ENCODE measurements at regions of chr7 and their contacts with region 1.

Region 1: DNA sequence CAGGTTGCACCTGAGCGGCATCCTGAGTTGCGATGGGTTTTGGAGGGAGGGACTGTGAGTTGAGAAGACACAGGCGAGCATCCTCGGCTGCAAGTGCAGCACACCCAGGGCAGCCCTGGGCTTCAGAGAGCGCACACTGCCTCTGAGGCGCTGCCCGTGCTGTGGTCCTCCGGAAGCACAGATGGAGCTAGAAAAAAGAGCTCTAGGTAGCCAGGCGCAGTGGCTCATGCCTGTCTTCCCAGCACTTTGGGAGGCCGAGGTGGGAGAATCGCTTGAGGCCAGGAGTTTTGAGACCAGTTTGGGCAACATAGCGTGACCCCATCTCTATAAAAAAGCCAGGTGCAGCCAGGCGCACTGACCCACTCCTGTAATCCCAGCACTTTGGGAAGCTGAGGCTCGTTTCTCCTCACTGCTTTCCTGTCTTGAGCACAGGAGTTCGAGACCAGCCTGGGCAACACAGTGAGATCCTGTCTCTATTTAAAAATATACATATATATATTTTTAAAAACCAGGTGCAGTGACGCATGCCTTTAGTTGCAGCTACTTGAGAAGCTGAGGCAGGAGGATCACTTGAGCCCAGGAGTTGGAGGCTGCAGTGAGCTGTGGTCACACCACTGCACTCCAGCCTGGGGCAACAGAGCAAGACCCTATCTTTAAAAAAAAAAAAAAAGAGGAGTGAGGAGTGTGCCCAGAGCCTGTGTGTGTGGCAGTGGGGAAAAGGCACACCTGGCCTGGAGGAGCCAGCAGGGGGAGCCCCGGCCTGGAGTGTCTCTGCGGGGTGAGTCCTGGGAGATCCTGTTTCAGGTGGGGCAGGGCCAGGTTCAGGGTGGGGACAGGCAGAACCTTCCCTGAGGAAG is 9.3 kb upstream of the ARPC1B start:
- DNase-seq: no peak
- H3K4me3 ChIP-seq: no peak overlapping the region
- H3K27ac ChIP-seq: peak overlapping the region in 2 of 4 donors; percentile 2 to 62
- H3K4me1 ChIP-seq: peaks cover 0 to 26% (median 0%) of the 10 kb centered on the region in 3 donors
- H3K27me3 ChIP-seq: no peaks in the 10 kb centered on the region
- CTCF ChIP-seq: peak; percentile 55 to 73 (median 60)
- POLR2A ChIP-seq: no peak

Region 2: GRCh38 chr7:99193527-99194220 is 171.5 kb before region 1 on chr7:
- intact Hi-C with region 1: no loop called
- DNase-seq: no peak
- H3K4me3 ChIP-seq: no peak overlapping the region
- H3K27ac ChIP-seq: peak overlapping the region in 3 of 4 donors; percentile 13 to 44 (median 24)
- H3K4me1 ChIP-seq: peaks cover 0 to 35% (median 0%) of the 10 kb centered on the region in 3 donors
- H3K27me3 ChIP-seq: no peaks in the 10 kb centered on the region
- CTCF ChIP-seq: peak in 1 of 6 experiments; percentile 11
- POLR2A ChIP-seq: no peak

Region 3: DNA sequence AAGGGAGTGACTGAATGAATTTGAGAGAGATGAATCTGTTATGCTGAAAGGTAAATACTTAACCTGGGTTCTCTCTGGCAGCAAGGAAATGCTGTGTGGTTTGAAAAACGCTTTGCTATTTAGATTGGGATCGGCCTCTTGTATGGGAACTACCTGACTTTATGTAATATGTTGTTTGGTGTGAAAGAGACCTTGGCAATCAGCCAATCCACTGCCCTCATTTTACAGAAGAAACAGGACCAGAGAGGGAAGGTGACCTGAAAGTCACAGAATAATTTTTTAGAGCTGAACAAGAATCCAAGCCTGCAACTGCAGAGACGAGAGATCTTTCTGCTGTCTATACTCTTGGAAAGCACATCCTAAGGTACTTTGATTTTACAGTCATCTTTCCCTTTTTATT is 44.6 kb after region 1 on chr7:
- intact Hi-C with region 1: loop called (anchors 5 kb)
- DNase-seq: no peak
- H3K4me3 ChIP-seq: peak overlapping the region; percentile 74 to 98 (median 92)
- H3K27ac ChIP-seq: peak overlapping the region; percentile 96 to 99 (median 98)
- H3K4me1 ChIP-seq: peaks cover 22 to 50% (median 23%) of the 10 kb centered on the region in 3 donors
- H3K27me3 ChIP-seq: no peaks in the 10 kb centered on the region
- CTCF ChIP-seq: no peak
- POLR2A ChIP-seq: no peak

Region 4: DNA sequence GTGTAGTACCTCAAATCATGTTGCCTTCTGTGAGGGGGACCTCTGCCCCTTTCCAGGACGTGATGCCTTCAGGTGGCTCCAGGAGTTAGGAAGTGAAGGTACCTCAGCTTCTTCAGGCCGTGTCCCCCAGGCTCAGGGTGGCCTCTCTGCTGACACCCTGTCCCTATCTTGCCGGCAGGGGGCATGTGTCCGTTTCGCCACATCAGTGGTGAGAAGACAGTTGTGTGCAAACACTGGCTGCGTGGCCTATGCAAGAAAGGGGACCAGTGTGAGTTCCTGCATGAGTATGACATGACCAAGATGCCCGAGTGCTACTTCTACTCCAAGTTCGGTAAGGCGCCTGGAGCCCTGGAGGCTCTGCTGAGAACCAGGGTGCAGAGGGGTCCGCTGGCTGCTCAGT is 82.8 kb after region 1 on chr7:
- intact Hi-C with region 1: no loop called
- DNase-seq: no peak
- H3K4me3 ChIP-seq: no peak overlapping the region
- H3K27ac ChIP-seq: no peak overlapping the region
- H3K4me1 ChIP-seq: peaks cover 0 to 16% (median 0%) of the 10 kb centered on the region in 3 donors
- H3K27me3 ChIP-seq: no peaks in the 10 kb centered on the region
- CTCF ChIP-seq: peak in 1 of 6 experiments; percentile 25
- POLR2A ChIP-seq: no peak